Colonic mucosa (tissue), 4 donors: ENCODE measurements at regions of chr1 and their contacts with region 1.

Region 1: GRCh38 chr1:12528021-12528852 is 89.8 kb downstream of the DHRS3 start:
- DNase-seq: peak; percentile 96
- H3K4me3 ChIP-seq: no peak overlapping the region
- H3K27ac ChIP-seq: peak overlapping the region; percentile 47
- H3K4me1 ChIP-seq: peaks cover 14% of the 10 kb centered on the region
- H3K27me3 ChIP-seq: no peaks in the 10 kb centered on the region
- CTCF ChIP-seq: no peak

Region 2: GRCh38 chr1:12208764-12209494 is 319.3 kb before region 1 on chr1:
- intact Hi-C with region 1: no loop called
- DNase-seq: peak; percentile 93
- H3K4me3 ChIP-seq: no peak overlapping the region
- H3K27ac ChIP-seq: no peak overlapping the region
- H3K4me1 ChIP-seq: no peaks in the 10 kb centered on the region
- H3K27me3 ChIP-seq: no peaks in the 10 kb centered on the region
- CTCF ChIP-seq: peak; percentile 93

Region 3: DNA sequence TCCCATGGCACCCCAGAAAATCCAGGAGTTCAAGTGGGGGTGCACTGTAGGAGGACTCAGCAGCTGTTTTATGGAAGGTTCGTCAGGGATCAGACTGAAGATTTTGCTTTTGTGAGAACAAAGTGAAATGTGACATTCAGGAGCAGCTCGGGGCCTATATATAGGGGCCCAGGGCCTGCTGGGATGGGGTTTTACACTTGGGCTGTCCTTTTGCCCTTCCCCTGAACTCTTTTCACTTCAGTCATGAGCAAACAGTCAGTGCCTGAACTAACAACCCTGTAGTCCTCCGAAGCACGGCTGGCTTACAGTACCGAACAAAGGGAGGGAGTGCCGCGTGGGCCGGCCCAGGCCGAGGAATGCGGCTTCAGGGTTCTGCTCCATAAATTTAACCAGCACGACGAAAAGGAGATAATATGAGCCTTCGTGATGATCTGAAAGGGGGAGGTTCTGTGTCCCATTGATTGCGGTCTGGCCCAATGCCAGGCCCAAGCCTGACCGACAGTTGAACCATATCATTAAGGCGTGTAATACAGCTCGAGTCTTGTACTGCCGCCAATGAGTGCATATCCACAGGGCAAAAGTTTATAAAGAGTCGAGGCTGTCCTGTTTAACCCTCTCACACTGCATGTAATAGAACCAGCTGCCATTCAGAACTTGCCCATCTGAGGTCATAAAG is 50.2 kb before region 1 on chr1:
- intact Hi-C with region 1: loop called (anchors 5 kb)
- DNase-seq: peak; percentile 93
- H3K4me3 ChIP-seq: no peak overlapping the region
- H3K27ac ChIP-seq: peak overlapping the region; percentile 91
- H3K4me1 ChIP-seq: peaks cover 58% of the 10 kb centered on the region
- H3K27me3 ChIP-seq: no peaks in the 10 kb centered on the region
- CTCF ChIP-seq: no peak